Calu3 (cell line): ENCODE measurements at regions of chr3 and their contacts with region 1.

Region 1: DNA sequence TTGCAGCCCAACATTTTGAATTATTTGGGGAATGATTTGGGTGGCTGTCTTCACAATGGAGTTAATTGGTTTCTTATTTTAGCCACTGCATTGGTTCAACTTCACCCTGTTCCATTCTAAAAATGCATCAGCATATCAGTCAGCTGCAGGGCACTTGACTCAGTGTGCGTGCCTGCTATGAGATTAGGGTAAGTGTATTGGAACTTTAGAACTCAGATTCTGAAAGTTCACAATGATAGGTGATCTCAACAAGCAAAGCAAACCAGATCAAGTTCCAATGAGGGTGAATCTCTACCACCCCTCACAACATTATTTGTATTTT is 265.0 kb downstream of the ZPLD1 start:
- DNase-seq: no peak
- H3K4me3 Mint-ChIP-seq: no peak overlapping the region
- H3K27ac Mint-ChIP-seq: no peak overlapping the region
- H3K4me1 Mint-ChIP-seq: no peaks in the 10 kb centered on the region
- H3K27me3 Mint-ChIP-seq: no peaks in the 10 kb centered on the region
- CTCF ChIP-seq: no peak

Region 2: DNA sequence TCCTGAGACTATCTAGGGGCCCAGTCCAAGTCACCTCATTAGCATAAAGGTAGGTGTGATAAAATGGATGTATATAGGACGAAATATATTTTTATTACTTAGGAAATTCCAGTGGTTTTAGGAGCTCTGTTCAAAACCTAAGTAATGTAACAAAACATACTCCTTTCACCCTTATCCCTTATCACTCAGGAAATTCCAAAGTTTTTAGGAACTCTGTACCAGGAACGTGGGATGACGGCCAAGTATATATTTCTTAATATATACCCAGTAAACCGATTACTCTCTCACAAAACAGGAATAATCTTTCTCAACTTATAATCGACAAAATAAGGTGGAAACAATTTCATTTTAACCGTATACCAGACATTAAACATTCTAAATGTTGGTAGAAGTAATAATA is 69.2 kb before region 1 on chr3:
- CTCF ChIA-PET with region 1: no interaction called
- intact Hi-C with region 1: loop called (anchors 10 kb)
- DNase-seq: no peak
- H3K4me3 Mint-ChIP-seq: no peak overlapping the region
- H3K27ac Mint-ChIP-seq: no peak overlapping the region
- H3K4me1 Mint-ChIP-seq: no peaks in the 10 kb centered on the region
- H3K27me3 Mint-ChIP-seq: no peaks in the 10 kb centered on the region
- CTCF ChIP-seq: no peak